ENCODE measurements at regions of chrX and their contacts with region 1.

Region 1: GRCh38 chrX:70433848-70434351 is 10.7 kb upstream of the DLG3 start:
- DNase-seq: peak; percentile 83
- ATAC-seq: peak; percentile 70
- H3K4me3 ChIP-seq: peak overlapping the region; percentile 6 to 82 (median 72)
- H3K4me3 Mint-ChIP-seq: peak overlapping the region; percentile 92
- H3K27ac ChIP-seq: peak overlapping the region; percentile 68
- H3K27ac Mint-ChIP-seq: peak overlapping the region; percentile 93
- H3K4me1 ChIP-seq: peaks cover 9 to 17% of the 10 kb centered on the region in 2 donors
- H3K4me1 Mint-ChIP-seq: peaks cover 19% of the 10 kb centered on the region
- H3K27me3 ChIP-seq: no peaks in the 10 kb centered on the region
- H3K27me3 Mint-ChIP-seq: peaks cover 13% of the 10 kb centered on the region
- CTCF ChIP-seq: peak; percentile 69

Region 2: DNA sequence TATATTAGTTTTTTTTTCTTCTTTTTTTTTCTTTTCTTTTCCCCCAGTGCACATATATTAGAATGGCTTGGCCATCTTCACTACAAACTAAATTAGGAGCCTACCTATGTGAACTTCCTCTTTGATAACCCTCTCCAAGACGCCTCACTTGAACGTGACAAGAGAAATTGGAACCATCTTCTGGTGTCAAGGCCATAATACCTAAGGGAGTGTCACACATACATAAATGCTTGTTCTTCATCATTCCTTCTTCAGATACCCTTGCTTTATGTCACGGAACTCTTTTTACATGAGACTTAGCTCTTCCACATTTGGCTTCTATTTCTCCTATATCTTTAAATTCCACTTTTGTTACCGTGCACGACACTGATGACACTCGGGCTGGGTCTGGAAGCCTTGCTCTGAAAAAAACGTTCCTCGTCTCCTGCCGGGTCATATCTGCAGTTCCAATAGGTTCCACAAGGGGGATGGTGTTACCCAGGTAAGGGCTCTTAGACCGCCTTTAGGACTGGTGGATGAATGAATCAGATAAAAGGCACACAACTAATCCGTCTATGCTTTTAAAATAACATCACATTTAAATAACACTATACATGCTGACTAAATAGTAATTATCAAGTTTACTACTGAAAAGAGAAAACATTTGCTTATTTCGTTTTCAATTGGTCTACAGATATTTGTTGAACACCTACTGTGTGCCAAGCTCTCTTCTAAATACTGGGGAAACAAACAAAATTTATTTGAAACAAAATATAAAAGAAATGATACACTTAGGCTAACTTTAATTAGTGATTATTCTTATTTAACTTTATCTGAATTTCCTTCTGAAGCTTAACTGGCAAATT is 236.7 kb before region 1 on chrX:
- CTCF ChIA-PET with region 1: interaction called, 10 read pairs
- POLR2A ChIA-PET with region 1: no interaction called
- intact Hi-C with region 1: loop called (anchors 1 kb)
- DNase-seq: peak; percentile 66
- ATAC-seq: peak; percentile 67
- H3K4me3 ChIP-seq: no peak overlapping the region
- H3K4me3 Mint-ChIP-seq: no peak overlapping the region
- H3K27ac ChIP-seq: no peak overlapping the region
- H3K27ac Mint-ChIP-seq: no peak overlapping the region
- H3K4me1 ChIP-seq: no peaks in the 10 kb centered on the region
- H3K4me1 Mint-ChIP-seq: peaks cover 2% of the 10 kb centered on the region
- H3K27me3 ChIP-seq: no peaks in the 10 kb centered on the region
- H3K27me3 Mint-ChIP-seq: no peaks in the 10 kb centered on the region
- CTCF ChIP-seq: peak; percentile 71

Region 3: DNA sequence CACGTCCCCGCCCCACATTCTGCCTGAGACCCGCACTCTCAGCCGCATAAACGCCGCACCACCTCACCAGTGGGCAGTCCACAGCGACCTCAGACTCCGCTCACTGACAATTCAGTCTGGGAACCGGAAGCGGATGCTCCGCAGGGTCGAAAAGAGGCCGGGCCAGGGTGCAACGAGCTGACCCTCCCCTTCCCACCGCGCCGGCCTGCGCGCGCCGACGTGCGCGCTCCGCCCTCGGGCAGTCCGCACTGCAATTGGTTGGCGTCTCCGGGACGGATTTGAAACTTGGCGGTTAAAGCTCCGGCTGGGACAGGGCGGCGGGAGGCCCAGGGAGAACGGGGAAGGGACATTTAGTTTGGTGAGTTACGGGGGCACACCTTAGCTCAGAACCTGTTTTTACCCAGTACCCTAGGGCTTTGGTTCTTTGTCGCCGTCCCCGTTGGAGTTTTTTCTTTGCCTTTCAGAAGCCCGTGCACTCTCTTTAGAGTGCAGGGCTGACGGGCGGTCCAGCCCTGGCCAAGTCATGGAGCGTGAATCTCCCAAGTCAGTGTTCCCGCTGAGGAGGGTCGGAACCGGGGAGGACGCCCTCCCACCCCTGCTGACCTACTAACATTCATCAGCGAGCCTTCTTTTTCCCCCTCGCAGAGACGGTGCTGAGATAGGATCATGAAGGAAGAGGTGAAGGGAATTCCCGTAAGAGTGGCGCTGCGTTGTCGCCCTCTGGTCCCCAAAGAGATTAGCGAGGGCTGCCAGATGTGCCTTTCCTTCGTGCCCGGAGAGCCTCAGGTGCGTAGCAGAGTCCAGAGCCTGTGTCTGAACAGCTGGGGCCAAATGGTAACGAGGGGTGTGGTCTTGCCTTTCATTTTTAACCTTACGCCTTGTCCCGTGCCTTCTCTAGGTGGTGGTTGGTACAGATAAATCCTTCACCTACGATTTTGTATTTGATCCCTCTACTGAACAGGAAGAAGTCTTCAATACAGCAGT is 143.8 kb before region 1 on chrX and contains the starts of genes KIF4A and PDZD11:
- CTCF ChIA-PET with region 1: no interaction called
- POLR2A ChIA-PET with region 1: no interaction called
- intact Hi-C with region 1: loop called (anchors 1 kb)
- DNase-seq: peak; percentile 75
- ATAC-seq: peak; percentile 99
- H3K4me3 ChIP-seq: peak within 1 kb of the TSS; percentile 45 to 75 (median 57)
- H3K4me3 Mint-ChIP-seq: peak within 1 kb of the TSS; percentile 89
- H3K27ac ChIP-seq: peak within 1 kb of the TSS; percentile 33 to 53
- H3K27ac Mint-ChIP-seq: peak within 1 kb of the TSS; percentile 78
- H3K4me1 ChIP-seq: peaks cover 10 to 13% of the 10 kb centered on the region in 2 donors
- H3K4me1 Mint-ChIP-seq: peaks cover 20% of the 10 kb centered on the region
- H3K27me3 ChIP-seq: no peaks in the 10 kb centered on the region
- H3K27me3 Mint-ChIP-seq: no peaks in the 10 kb centered on the region
- CTCF ChIP-seq: no peak
- total RNA-seq, gene KIF4A: 0.07 and 0.22 TPM in 2 replicates
- total RNA-seq, gene PDZD11: 12.0 and 13.8 TPM in 2 replicates

Region 4: DNA sequence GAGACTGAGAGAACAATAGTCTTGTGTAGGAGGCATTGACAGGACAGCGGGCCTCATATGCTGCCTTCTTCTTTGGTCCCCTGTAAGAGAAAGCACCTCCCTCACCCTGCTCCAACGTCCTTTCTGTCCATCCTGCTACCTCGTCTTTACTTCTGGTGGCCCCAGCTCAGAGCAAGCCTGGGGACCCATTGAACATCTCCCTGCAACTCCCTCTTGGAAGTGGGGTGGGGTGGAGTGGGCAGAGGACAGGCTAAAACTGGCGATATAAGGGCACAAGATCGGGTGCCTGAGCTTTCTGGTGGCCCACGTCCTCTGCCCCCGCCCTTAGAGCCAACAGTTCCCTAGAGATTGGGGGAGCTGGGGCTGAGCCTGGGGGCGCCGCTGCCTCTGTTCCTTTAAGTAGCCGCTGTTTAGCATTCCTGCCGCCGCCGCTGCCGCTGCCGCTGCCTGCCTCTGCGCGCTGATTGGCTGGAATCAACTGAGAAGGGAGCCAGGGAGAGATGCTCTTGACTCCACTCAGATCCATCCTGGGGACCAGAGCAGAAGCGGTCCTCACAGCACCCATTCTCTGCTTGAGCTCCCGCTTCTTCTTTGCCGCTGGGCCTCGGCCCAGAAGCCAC is 10.5 kb after region 1 on chrX and contains the start of gene DLG3:
- CTCF ChIA-PET with region 1: interaction called, 14 read pairs
- POLR2A ChIA-PET with region 1: no interaction called
- intact Hi-C with region 1: no loop called
- DNase-seq: peak; percentile 34
- ATAC-seq: peak; percentile 49
- H3K4me3 ChIP-seq: peak within 1 kb of the TSS in 3 of 5 experiments; percentile 21 to 33 (median 33)
- H3K4me3 Mint-ChIP-seq: peak within 1 kb of the TSS; percentile 78
- H3K27ac ChIP-seq: no peak within 1 kb of the TSS
- H3K27ac Mint-ChIP-seq: no peak within 1 kb of the TSS
- H3K4me1 ChIP-seq: peaks cover 4 to 10% of the 10 kb centered on the region in 2 donors
- H3K4me1 Mint-ChIP-seq: peaks cover 5% of the 10 kb centered on the region
- H3K27me3 ChIP-seq: peaks cover 0 to 17% (median 10%) of the 10 kb centered on the region in 4 experiments
- H3K27me3 Mint-ChIP-seq: peaks cover 24% of the 10 kb centered on the region
- CTCF ChIP-seq: no peak
- total RNA-seq, gene DLG3: 6.9 and 7.4 TPM in 2 replicates

Region 5: DNA sequence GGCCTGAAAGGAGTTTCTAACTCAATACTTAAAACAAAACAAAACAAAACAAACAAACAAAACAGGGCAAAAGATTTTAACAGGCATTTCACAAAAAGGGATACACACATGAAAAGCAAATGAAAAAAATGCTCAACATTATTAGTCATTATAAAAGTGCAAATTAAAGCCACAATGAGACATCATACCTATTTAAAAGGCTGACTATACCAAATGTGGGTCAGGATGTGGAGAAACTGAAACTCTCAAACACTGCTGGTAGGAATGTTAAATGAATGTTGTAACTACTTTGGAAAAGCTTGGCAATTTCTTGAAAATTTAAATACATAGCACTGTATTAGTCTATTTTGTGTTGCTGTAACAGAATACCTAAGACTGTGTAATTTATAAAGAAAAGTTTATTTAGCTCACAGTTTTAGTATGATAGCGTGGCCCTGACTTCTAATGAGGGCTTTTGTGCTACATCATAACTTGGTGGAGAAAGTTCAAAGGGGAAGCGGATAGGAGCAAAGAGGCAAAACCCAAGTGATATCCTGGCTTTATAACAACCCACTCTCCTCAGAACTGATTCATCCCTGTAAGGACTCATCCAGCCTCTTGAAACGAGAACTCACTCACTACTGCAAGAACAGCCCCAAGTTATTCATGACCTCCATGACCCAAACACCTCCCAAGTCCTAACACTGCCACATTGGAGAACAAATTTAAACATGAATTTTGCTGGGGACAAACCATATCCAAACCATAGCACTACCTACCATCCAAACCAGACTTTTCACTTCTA is 260.6 kb after region 1 on chrX:
- CTCF ChIA-PET with region 1: no interaction called
- POLR2A ChIA-PET with region 1: no interaction called
- intact Hi-C with region 1: no loop called
- DNase-seq: no peak
- ATAC-seq: no peak
- H3K4me3 ChIP-seq: no peak overlapping the region
- H3K4me3 Mint-ChIP-seq: no peak overlapping the region
- H3K27ac ChIP-seq: no peak overlapping the region
- H3K27ac Mint-ChIP-seq: no peak overlapping the region
- H3K4me1 ChIP-seq: no peaks in the 10 kb centered on the region
- H3K4me1 Mint-ChIP-seq: no peaks in the 10 kb centered on the region
- H3K27me3 ChIP-seq: no peaks in the 10 kb centered on the region
- H3K27me3 Mint-ChIP-seq: no peaks in the 10 kb centered on the region
- CTCF ChIP-seq: no peak

Measured in B cell (primary cell).